Mammary epithelial cell (primary cell): ENCODE measurements at regions of chr7 and their contacts with region 1.

Region 1: DNA sequence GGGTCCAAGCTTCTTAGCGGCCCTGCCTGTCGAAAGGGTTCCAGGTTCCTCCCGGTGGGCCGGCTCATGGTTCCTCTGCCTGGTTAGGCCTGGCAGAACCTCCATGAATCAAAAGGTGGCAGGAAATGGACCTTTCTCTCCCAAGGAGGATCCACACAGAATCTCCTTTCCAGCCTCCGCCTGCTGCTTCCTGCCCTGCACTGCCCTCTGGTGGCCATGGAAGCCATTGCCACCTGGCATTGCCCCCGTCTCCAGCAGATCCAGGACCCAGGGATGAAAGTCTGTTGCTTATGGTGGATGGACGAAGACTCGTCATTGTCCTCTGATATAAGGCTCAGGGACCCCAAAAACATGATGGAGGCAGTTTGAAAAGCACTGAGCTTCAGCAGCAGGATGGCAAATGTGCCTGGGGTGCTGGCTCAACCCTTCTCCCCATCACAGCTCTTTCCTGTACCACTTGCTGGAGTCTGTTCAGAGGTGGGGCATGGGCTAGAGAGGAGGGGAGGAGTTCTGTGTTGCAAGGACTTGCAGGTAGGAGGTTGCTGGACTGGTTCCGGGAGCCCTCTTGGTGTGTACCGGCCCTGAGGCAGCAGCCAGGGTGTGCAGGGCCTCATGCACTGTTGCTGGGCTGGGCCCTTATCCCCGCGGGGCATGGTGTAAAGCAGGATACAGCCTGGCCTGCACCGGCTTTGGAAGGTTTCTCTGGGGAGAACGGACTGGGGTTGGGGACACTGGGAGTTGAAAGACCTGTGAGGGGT is 11.3 kb upstream of the INMT start:
- DNase-seq: peak; percentile 38
- H3K4me3 ChIP-seq: no peak overlapping the region
- H3K27ac ChIP-seq: no peak overlapping the region
- H3K4me1 ChIP-seq: no peaks in the 10 kb centered on the region
- H3K27me3 ChIP-seq: no peaks in the 10 kb centered on the region
- CTCF ChIP-seq: peak; percentile 99 to 100

Region 2: GRCh38 chr7:29588900-29589696 is 1151.5 kb before region 1 on chr7:
- CTCF ChIA-PET with region 1: no interaction called
- dilution Hi-C with region 1: no loop called
- in situ Hi-C with region 1: no loop called
- intact Hi-C with region 1: no loop called
- DNase-seq: no peak
- H3K4me3 ChIP-seq: no peak overlapping the region
- H3K27ac ChIP-seq: no peak overlapping the region
- H3K4me1 ChIP-seq: no peaks in the 10 kb centered on the region
- H3K27me3 ChIP-seq: no peaks in the 10 kb centered on the region
- CTCF ChIP-seq: peak; percentile 83 to 98

Region 3: GRCh38 chr7:30276203-30276900 is 464.3 kb before region 1 on chr7:
- CTCF ChIA-PET with region 1: interaction called, 4 read pairs
- dilution Hi-C with region 1: no loop called
- in situ Hi-C with region 1: no loop called
- intact Hi-C with region 1: loop called (anchors 1 kb)
- DNase-seq: peak; percentile 39
- H3K4me3 ChIP-seq: no peak overlapping the region
- H3K27ac ChIP-seq: no peak overlapping the region
- H3K4me1 ChIP-seq: no peaks in the 10 kb centered on the region
- H3K27me3 ChIP-seq: no peaks in the 10 kb centered on the region
- CTCF ChIP-seq: peak; percentile 68 to 76

Region 4: GRCh38 chr7:30548762-30549344 is 191.8 kb before region 1 on chr7:
- CTCF ChIA-PET with region 1: no interaction called
- dilution Hi-C with region 1: no loop called
- in situ Hi-C with region 1: no loop called
- intact Hi-C with region 1: loop called (anchors 1 kb)
- DNase-seq: peak; percentile 77
- H3K4me3 ChIP-seq: no peak overlapping the region
- H3K27ac ChIP-seq: peak overlapping the region; percentile 98
- H3K4me1 ChIP-seq: peaks cover 34% of the 10 kb centered on the region
- H3K27me3 ChIP-seq: no peaks in the 10 kb centered on the region
- CTCF ChIP-seq: peak; percentile 80 to 87

Region 5: DNA sequence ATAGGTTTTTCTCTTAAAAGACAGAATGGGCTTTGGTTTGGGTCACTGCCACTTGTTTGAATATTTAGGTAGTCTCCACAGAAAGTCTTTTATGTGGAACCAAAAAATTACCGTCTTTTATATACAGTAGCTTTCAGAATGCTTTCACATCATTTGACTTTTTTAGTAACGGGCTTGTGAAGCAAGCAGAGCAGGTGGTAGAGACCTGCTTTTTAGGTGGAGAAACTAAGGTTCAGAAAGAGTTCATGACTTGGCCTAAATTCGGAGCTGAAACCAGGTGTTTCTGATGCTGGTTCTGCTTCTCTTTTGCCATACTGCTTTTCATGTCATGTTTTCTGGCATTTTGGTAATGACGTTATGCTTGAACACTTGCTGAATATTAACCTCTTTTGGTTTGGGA is 109.6 kb before region 1 on chr7:
- CTCF ChIA-PET with region 1: no interaction called
- dilution Hi-C with region 1: no loop called
- in situ Hi-C with region 1: no loop called
- intact Hi-C with region 1: loop called (anchors 5 kb)
- DNase-seq: no peak
- H3K4me3 ChIP-seq: no peak overlapping the region
- H3K27ac ChIP-seq: no peak overlapping the region
- H3K4me1 ChIP-seq: no peaks in the 10 kb centered on the region
- H3K27me3 ChIP-seq: no peaks in the 10 kb centered on the region
- CTCF ChIP-seq: no peak

Region 6: GRCh38 chr7:30660331-30661255 is 80.0 kb before region 1 on chr7:
- CTCF ChIA-PET with region 1: no interaction called
- dilution Hi-C with region 1: no loop called
- in situ Hi-C with region 1: no loop called
- intact Hi-C with region 1: loop called (anchors 5 kb)
- DNase-seq: no peak
- H3K4me3 ChIP-seq: no peak overlapping the region
- H3K27ac ChIP-seq: no peak overlapping the region
- H3K4me1 ChIP-seq: no peaks in the 10 kb centered on the region
- H3K27me3 ChIP-seq: no peaks in the 10 kb centered on the region
- CTCF ChIP-seq: no peak

Region 7: GRCh38 chr7:30780941-30781340 is 40.3 kb after region 1 on chr7:
- CTCF ChIA-PET with region 1: no interaction called
- dilution Hi-C with region 1: loop called (anchors 5 kb)
- in situ Hi-C with region 1: no loop called
- intact Hi-C with region 1: no loop called
- DNase-seq: no peak
- H3K4me3 ChIP-seq: no peak overlapping the region
- H3K27ac ChIP-seq: no peak overlapping the region
- H3K4me1 ChIP-seq: no peaks in the 10 kb centered on the region
- H3K27me3 ChIP-seq: no peaks in the 10 kb centered on the region
- CTCF ChIP-seq: no peak

Region 8: DNA sequence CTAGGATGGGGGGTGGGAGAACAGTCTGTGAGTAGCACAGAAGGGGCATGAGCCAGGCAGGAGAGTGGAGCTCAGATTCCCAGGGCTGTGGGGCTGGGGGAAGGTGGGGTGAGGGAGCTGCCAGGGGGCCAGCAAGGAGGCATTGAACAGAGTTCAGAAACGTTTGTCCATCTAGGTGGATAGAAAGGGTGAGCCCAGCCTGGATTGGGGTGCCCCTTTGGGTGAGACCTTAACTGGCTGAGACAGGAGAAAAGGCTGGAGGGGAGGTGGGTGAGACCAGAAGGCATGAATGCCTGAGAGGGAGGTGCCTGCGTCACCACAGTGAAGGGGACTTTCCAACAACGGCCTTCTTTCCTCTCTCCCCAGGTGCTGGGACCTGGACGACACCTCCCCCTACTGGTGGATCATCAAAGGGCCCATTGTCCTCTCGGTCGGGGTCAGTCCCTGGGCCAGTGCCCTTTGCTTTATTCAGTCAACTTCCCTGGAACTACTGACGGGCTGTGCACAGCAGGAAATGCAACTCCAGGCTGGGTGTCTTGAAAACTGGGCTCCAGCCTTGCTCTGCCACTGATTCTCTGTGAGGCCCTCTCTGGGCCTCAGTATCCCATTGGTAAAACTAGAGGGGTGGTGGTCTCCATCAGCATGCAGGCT is 234.1 kb after region 1 on chr7:
- CTCF ChIA-PET with region 1: no interaction called
- dilution Hi-C with region 1: no loop called
- in situ Hi-C with region 1: no loop called
- intact Hi-C with region 1: loop called (anchors 1 kb)
- DNase-seq: peak; percentile 76
- H3K4me3 ChIP-seq: no peak overlapping the region
- H3K27ac ChIP-seq: no peak overlapping the region
- H3K4me1 ChIP-seq: no peaks in the 10 kb centered on the region
- H3K27me3 ChIP-seq: no peaks in the 10 kb centered on the region
- CTCF ChIP-seq: peak; percentile 89 to 93